Activated CD8-positive, alpha-beta memory T cell treated with anti-CD3 and anti-CD28 coated beads, Interleukin-2, amount 10 ng/mL, durations not matched to agents 7 days and 5 days (primary cell): ENCODE measurements at regions of chr16 and their contacts with region 1.

Region 1: GRCh38 chr16:66947302-66948065 is 12.2 kb downstream of the CES2 start:
- DNase-seq: peak; percentile 92
- ATAC-seq: peak; percentile 88
- H3K4me3 Mint-ChIP-seq: peak overlapping the region; percentile 79
- H3K27ac Mint-ChIP-seq: peak overlapping the region; percentile 57
- H3K4me1 Mint-ChIP-seq: peaks cover 33% of the 10 kb centered on the region
- H3K27me3 Mint-ChIP-seq: peaks cover 21% of the 10 kb centered on the region

Region 2: GRCh38 chr16:66927918-66928649 is 19.4 kb before region 1 on chr16:
- CTCF ChIA-PET with region 1: no interaction called
- DNase-seq: no peak
- ATAC-seq: no peak
- H3K4me3 Mint-ChIP-seq: no peak overlapping the region
- H3K27ac Mint-ChIP-seq: peak overlapping the region; percentile 14
- H3K4me1 Mint-ChIP-seq: peaks cover 34% of the 10 kb centered on the region
- H3K27me3 Mint-ChIP-seq: peaks cover 29% of the 10 kb centered on the region

Region 3: GRCh38 chr16:66961065-66961744 is 13.7 kb after region 1 on chr16 and contains the start of gene CES3:
- CTCF ChIA-PET with region 1: interaction called, 34 read pairs
- DNase-seq: peak; percentile 84
- ATAC-seq: peak; percentile 96
- H3K4me3 Mint-ChIP-seq: peak within 1 kb of the TSS; percentile 56
- H3K27ac Mint-ChIP-seq: peak within 1 kb of the TSS; percentile 72
- H3K4me1 Mint-ChIP-seq: peaks cover 29% of the 10 kb centered on the region
- H3K27me3 Mint-ChIP-seq: no peaks in the 10 kb centered on the region
- total RNA-seq, gene CES3: 2.3 to 4.5 TPM

Region 4: DNA sequence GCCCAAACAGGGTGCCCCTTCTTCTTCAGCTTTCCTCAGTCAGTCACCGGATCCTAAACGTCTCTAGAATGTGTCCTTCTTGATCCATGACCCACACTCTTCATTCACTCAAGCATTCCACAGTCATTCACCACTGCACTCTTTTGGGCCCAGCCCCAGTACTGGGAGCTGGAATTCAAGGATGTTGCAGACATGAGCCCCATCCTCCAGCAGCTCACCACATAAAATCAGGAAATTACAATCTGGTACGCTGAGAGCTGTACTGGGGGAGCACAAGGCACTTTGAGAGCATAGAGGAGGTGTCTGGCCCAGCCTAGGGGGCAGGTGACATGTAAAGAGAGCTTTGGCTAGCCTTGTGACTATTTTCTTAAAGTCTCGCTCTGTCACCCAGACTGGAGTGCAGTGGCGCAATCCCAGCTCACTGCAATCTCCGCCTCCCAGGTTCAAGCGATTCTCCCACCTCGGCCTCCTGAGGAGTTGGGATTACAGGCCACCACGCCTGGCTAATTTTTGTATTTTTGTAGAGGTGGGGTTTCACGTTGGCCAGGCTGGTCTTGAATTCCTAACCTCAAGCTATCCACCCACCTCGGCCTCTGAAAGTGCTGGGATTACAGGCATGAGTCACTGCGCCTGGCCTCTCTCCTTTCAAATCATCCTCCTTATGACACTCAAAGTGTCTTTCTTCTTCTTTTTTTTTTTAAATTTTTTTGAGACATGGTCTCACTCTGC is 59.6 kb after region 1 on chr16:
- CTCF ChIA-PET with region 1: no interaction called
- DNase-seq: no peak
- ATAC-seq: no peak
- H3K4me3 Mint-ChIP-seq: no peak overlapping the region
- H3K27ac Mint-ChIP-seq: peak overlapping the region; percentile 9
- H3K4me1 Mint-ChIP-seq: peaks cover 25% of the 10 kb centered on the region
- H3K27me3 Mint-ChIP-seq: no peaks in the 10 kb centered on the region

Region 5: GRCh38 chr16:67091906-67092566 is 144.6 kb after region 1 on chr16:
- CTCF ChIA-PET with region 1: no interaction called
- DNase-seq: no peak
- ATAC-seq: no peak
- H3K4me3 Mint-ChIP-seq: no peak overlapping the region
- H3K27ac Mint-ChIP-seq: peak overlapping the region; percentile 21
- H3K4me1 Mint-ChIP-seq: peaks cover 2% of the 10 kb centered on the region
- H3K27me3 Mint-ChIP-seq: no peaks in the 10 kb centered on the region